Activated CD8-positive, alpha-beta T cell treated with anti-CD3 and anti-CD28 coated beads for 36 hours (primary cell): ENCODE measurements at regions of chr1 and their contacts with region 1.

Region 1: DNA sequence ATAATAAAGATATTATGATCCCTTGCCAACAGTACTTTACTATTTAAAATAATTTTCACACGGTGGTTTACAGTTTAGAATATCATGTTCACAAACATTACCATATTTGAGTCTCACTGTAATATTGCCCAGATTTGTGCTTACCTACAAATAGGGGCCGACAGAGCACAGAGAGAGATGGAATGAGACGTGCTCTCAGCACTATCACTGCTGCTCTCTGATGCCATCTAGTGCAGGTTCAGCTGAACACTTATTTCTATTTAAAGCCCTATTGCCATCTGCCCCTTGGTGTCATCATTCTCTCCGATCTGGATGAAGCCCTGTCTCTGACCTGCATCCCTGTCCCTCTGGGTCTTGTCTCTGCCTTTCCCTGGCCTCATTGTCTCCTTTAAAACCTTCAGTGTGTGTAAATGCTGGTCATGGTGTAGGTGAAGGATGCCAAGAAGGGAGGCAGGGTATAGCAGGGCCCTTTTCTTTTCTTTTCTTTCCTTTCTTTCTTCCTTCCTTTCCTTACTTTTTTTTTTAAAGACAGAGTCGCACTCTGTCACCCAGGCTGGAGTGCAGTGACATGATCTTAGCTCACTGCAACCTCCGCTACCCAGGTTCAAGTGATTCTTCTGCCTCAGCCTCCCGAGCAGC is 6.9 kb upstream of the GPATCH4 start:
- DNase-seq: peak; percentile 77
- ATAC-seq: peak; percentile 98
- H3K4me3 Mint-ChIP-seq: no peak overlapping the region
- H3K27ac Mint-ChIP-seq: peak overlapping the region; percentile 50
- H3K4me1 Mint-ChIP-seq: peaks cover 8% of the 10 kb centered on the region
- H3K27me3 Mint-ChIP-seq: peaks cover 3% of the 10 kb centered on the region
- CTCF ChIP-seq: peak; percentile 86

Region 2: DNA sequence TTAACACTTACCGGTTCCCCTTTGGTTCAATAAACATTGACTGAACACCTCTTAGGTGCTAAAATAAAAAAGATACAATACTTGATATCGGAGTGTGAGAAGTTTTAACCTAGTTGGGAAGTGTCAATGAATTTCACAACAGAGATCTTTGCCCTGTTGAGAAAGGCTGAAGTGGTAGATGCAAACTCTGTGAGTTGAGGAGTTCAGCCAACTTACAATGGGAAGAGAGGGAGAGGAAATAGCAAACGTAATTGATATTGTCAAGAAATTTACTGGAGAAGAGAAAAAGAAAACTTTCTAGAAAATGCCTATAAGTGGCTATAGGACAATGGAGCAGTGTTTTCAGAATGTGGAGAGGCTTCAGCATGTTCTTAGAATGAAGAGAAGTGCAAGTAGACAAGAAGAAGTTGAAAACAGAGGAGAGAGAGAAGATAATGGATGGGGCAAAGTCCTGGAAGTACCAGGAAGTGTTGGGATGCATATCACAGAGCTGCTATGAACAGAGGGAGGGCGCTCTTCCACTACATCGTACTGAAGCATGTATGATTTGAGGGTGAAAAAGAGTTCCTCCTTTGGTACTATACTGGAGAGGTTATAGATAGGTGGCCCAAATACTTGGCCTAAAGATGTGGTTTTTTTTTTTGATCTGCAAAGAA is 156.5 kb before region 1 on chr1:
- CTCF ChIA-PET with region 1: interaction called, 18 read pairs
- POLR2A ChIA-PET with region 1: no interaction called
- intact Hi-C with region 1: loop called (anchors 5 kb)
- DNase-seq: no peak
- ATAC-seq: no peak
- H3K4me3 Mint-ChIP-seq: no peak overlapping the region
- H3K27ac Mint-ChIP-seq: no peak overlapping the region
- H3K4me1 Mint-ChIP-seq: peaks cover 14% of the 10 kb centered on the region
- H3K27me3 Mint-ChIP-seq: peaks cover 8% of the 10 kb centered on the region
- CTCF ChIP-seq: no peak

Region 3: DNA sequence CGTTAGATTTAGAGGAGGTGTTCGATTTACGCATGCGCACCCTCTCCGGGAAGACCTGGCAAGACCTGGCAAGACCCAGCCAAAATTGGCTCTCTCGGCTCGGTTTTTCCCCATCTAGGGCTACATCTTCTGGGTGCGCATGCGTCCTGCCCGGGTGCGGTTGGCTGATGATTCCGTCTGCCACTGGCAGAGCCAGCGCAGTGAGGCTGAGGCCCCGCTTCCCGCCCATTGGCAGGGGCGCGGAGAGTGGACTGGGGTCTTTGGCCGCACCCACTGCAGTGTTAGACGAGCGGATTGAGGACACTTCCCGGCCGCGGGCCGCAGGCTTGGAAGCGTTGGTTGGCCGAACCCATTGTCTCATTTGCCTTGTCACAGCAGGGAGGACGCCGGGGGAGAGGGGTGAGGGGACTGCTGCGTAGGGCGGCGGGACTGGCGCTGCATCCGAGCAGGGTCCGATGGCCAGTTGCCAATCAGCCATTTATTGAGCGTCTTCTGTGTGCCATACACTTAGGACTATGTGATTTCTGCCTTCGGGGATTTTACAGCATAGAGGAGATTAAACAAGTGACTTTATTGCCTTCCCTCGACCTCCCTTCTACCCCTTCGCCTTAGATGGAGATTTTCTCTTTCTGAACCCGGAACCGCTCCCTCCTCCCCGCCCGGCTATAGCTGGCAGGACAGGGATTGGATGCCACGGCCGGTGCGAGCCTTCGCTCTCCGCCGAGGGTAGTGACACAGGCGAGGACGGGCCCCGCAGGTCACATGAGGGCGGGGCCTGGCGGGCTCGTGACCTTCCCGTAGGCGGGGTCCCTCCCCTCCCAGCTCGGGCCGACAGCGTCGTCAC is 151.3 kb before region 1 on chr1:
- CTCF ChIA-PET with region 1: interaction called, 16 read pairs
- POLR2A ChIA-PET with region 1: interaction called, 3 read pairs
- intact Hi-C with region 1: loop called (anchors 5 kb)
- DNase-seq: peak; percentile 99
- ATAC-seq: peak; percentile 90
- H3K4me3 Mint-ChIP-seq: peak overlapping the region; percentile 91
- H3K27ac Mint-ChIP-seq: peak overlapping the region; percentile 99
- H3K4me1 Mint-ChIP-seq: peaks cover 19% of the 10 kb centered on the region
- H3K27me3 Mint-ChIP-seq: no peaks in the 10 kb centered on the region
- CTCF ChIP-seq: peak; percentile 1

Region 4: DNA sequence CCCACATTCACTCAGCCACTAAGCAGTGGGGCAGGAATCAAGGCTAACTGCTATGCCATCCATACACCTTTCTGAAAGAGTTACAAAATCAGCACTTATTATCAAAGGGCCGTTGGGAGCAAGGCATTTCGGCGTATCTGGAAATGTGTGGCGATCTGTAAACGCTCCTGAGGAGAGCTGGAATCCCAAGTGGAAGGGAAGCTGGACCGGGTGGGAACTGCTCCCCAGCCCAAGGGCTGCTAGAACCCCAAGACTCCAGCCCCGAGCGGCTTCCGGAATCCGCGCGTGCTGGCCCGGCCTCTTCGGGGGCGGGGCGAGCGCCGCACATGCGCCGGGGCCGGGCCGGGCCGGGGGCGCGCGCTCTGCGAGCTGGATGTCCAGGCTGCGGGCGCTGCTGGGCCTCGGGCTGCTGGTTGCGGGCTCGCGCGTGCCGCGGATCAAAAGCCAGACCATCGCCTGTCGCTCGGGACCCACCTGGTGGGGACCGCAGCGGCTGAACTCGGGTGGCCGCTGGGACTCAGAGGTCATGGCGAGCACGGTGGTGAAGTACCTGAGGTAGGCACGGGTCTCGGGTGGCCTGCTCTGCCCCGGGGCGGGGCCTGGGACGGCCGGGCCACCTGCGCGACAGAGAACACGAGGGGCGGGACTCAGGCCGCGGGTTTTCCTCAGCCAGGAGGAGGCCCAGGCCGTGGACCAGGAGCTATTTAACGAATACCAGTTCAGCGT is 16.6 kb before region 1 on chr1 and contains the start of gene NAXE:
- CTCF ChIA-PET with region 1: interaction called, 24 read pairs
- POLR2A ChIA-PET with region 1: interaction called, 14 read pairs
- intact Hi-C with region 1: no loop called
- DNase-seq: peak; percentile 73
- ATAC-seq: peak; percentile 92
- H3K4me3 Mint-ChIP-seq: peak within 1 kb of the TSS; percentile 77
- H3K27ac Mint-ChIP-seq: peak within 1 kb of the TSS; percentile 87
- H3K4me1 Mint-ChIP-seq: peaks cover 30% of the 10 kb centered on the region
- H3K27me3 Mint-ChIP-seq: no peaks in the 10 kb centered on the region
- CTCF ChIP-seq: no peak
- total RNA-seq, gene NAXE: 65.4 to 68.6 TPM

Region 5: GRCh38 chr1:156618853-156619581 is 10.9 kb after region 1 on chr1 and contains the start of gene HAPLN2:
- CTCF ChIA-PET with region 1: interaction called, 88 read pairs
- POLR2A ChIA-PET with region 1: no interaction called
- intact Hi-C with region 1: no loop called
- DNase-seq: peak; percentile 37
- ATAC-seq: no peak
- H3K4me3 Mint-ChIP-seq: no peak within 1 kb of the TSS
- H3K27ac Mint-ChIP-seq: no peak within 1 kb of the TSS
- H3K4me1 Mint-ChIP-seq: peaks cover 4% of the 10 kb centered on the region
- H3K27me3 Mint-ChIP-seq: peaks cover 40% of the 10 kb centered on the region
- CTCF ChIP-seq: no peak
- total RNA-seq, gene HAPLN2: not detected